ENCODE measurements at regions of chr20 and their contacts with region 1.

Region 1: GRCh38 chr20:50504231-50504823 is 5.9 kb upstream of the PTPN1 start:
- DNase-seq: no peak
- H3K4me3 ChIP-seq: no peak overlapping the region
- H3K27ac ChIP-seq: no peak overlapping the region
- H3K4me1 ChIP-seq: peaks cover 0 to 2% (median 0%) of the 10 kb centered on the region in 4 experiments; a peak in 1 of 7 replicates
- H3K27me3 ChIP-seq: no peaks in the 10 kb centered on the region
- CTCF ChIP-seq: no peak; a peak in 1 of 4 replicates
- EP300 ChIP-seq: no peak
- POLR2A ChIP-seq: no peak
- RAD21 ChIP-seq: peak; percentile 10 to 31; a peak in 3 of 4 replicates

Region 2: GRCh38 chr20:50456471-50457324 is 47.6 kb before region 1 on chr20:
- CTCF ChIA-PET with region 1: no interaction called
- POLR2A ChIA-PET with region 1: no interaction called
- DNase-seq: no peak
- H3K4me3 ChIP-seq: no peak overlapping the region
- H3K27ac ChIP-seq: no peak overlapping the region
- H3K4me1 ChIP-seq: peaks cover 0 to 8% (median 2%) of the 10 kb centered on the region in 4 experiments; a peak in 6 of 7 replicates
- H3K27me3 ChIP-seq: no peaks in the 10 kb centered on the region
- CTCF ChIP-seq: peak; percentile 30 to 58 (median 52); a peak in 3 of 4 replicates
- EP300 ChIP-seq: no peak
- POLR2A ChIP-seq: no peak
- RAD21 ChIP-seq: peak; percentile 19 to 36; a peak in 3 of 4 replicates

Region 3: DNA sequence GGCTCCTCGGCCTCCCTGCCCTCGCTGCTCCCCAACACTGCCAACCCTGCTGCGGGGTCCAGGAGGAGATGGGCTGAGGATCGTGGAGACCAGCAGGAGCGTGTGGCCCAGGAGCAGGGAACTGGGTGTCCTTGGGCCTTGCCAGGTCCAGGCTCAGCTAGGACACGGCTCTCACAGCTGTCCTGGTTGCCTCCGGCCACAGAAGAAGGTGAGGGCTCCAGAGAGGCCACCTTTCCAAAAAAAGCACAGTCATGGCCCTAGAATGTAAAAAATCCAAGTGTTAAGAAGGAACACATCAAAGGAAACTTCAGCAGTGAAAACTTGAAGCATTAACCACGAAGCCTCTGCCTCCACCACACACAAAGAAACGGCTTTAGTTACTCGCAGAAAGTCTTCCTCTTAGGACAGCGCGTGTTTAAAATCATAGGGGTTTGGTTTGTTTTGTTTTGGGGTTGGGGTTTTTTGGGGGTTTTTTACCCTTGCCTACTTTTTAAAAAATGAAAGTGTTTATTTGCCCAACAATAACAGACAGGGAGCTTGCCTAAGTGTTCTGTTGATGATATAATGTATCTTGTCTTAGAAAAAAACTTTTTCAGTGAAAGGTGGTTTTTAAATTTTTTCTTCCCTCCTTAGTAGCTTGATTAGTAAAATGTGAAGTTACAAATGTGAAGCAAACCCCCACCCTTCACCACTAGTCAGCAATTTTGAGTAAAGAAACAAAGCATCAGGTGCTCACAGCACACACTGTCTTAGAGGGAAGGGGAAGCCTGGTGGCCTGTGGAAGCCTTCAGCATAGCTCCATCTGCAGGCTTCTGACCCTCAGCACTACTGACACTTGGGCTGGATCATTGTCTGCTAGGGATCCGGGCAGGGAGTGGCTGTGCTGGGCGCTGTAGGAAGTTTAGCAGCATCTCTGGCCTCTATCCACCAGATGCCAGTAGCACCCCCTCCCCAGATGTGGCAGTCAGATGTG is 65.8 kb after region 1 on chr20:
- CTCF ChIA-PET with region 1: interaction called, 60 read pairs
- POLR2A ChIA-PET with region 1: interaction called, 3 read pairs
- DNase-seq: no peak
- H3K4me3 ChIP-seq: no peak overlapping the region
- H3K27ac ChIP-seq: no peak overlapping the region
- H3K4me1 ChIP-seq: no peaks in the 10 kb centered on the region
- H3K27me3 ChIP-seq: no peaks in the 10 kb centered on the region
- CTCF ChIP-seq: peak; percentile 51 to 71 (median 67)
- EP300 ChIP-seq: no peak
- POLR2A ChIP-seq: no peak
- RAD21 ChIP-seq: peak; percentile 57 to 67

Region 4: DNA sequence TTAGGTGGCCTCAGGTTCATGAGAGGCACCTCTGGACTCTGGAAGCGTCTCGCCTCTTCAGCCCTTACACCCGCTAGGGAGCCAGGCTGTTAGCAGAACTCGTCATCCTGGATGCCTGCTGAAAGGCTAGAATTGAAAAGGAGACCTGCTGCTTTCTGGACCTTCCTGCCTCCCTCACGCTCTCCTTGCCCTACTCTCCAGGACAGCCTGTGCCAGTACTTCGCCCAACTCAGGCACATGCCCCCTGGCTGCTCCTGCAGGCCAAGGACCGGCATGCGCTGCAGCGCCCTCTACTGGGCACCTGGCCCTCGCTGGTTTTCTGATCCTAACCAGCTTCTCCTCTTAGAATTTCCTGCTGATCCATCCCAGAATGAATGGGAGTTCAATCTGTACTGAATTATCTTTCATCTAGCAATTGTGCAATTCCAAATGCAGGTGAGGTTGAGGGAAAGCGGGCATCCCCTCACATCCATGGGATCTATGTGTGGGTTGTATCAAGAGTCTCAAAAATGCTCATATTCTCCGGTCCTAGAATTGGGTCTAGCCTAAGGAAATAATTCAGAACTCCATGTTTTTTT is 83.8 kb after region 1 on chr20:
- CTCF ChIA-PET with region 1: interaction called, 18 read pairs
- POLR2A ChIA-PET with region 1: no interaction called
- DNase-seq: peak in 1 of 2 experiments; percentile 99
- H3K4me3 ChIP-seq: no peak overlapping the region
- H3K27ac ChIP-seq: no peak overlapping the region
- H3K4me1 ChIP-seq: no peaks in the 10 kb centered on the region
- H3K27me3 ChIP-seq: no peaks in the 10 kb centered on the region
- CTCF ChIP-seq: peak; percentile 99
- EP300 ChIP-seq: no peak
- POLR2A ChIP-seq: no peak
- RAD21 ChIP-seq: peak; percentile 64 to 75